Ascending aorta (tissue), 2 donors: ENCODE measurements at regions of chr2 and their contacts with region 1.

Region 1: GRCh38 chr2:237691908-237692600 is 64.7 kb downstream of the LRRFIP1 start:
- DNase-seq: peak in 1 of 2 donors; percentile 96
- H3K4me3 ChIP-seq: peak overlapping the region; percentile 78 to 86
- H3K27ac ChIP-seq: peak overlapping the region; percentile 97 to 99
- H3K4me1 ChIP-seq: peaks cover 34 to 62% of the 10 kb centered on the region in 2 donors
- H3K27me3 ChIP-seq: no peaks in the 10 kb centered on the region
- CTCF ChIP-seq: peak in 1 of 3 experiments; percentile 12

Region 2: DNA sequence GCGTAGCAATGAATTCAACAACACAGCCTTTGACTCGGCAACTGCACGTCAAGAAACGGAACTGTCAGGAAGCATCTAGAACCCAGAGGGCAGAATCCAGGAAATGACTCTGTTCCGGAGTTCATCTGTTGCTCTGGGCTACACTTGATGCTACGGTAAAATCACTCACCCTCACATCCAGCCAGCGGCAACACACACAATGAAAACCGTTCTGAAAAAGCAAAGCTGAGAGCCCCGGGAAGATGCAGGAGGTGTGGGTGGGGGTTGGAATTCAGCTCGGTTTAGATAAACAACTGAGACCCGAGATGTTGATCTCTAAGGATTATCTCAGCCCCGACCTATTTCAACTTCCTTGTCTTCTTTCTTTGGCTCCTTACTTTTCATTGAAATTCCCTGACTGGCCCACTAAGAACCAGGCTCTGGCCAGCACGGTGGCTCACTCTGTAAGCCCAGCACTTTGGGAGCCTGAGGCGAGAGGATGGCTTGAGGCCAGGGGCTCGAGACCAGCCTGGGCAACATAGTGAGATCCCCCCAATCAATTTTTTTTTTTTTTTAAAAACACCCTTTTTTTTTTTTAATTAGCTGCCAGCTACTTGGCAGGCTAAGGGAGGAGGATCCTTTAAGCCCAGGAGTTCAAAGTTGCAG is 88.2 kb before region 1 on chr2:
- intact Hi-C with region 1: loop called (anchors 5 kb)
- DNase-seq: peak in 1 of 2 donors; percentile 86
- H3K4me3 ChIP-seq: peak overlapping the region in 1 of 2 donors; percentile 21
- H3K27ac ChIP-seq: peak overlapping the region; percentile 75 to 90
- H3K4me1 ChIP-seq: peaks cover 17 to 31% of the 10 kb centered on the region in 2 donors
- H3K27me3 ChIP-seq: no peaks in the 10 kb centered on the region
- CTCF ChIP-seq: no peak

Region 3: DNA sequence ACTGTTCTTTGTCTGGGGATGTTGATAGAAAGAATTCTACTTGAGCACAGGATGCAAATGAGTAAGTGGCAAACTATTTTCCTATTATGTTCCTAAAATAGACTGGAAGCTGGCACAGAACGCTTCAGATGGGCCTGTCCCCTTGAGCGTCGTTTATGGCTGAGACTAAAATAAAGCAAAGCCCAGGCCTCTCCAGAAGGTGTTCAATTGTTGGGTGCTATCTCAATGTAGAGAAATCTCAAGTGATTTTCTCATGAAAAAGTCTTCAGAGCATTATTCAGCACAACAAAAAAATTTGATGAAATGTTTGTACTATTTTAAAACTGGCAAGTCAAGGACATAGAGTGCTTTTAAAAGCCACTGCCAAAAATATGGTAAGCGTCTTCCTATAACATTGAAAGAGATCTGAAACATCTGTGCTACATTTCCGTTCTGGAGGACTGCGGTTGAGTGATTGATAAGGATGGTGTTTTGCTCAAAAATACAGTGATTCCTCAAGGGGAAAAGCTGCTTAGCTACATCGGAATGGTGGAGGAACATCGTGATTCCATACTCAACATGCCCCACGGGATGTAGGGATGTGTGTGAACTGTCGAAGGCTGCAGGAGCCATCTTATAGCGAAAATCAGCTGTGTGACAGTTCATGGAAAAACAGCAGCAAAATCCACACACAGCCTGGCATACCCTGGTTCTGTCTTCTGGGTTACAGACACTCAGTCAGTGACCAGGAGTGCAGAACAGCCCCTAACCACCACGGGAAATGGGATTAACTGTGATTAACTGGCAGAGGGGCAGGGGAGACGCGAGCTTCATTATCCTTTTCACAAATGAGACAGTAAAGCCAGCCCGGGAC is 75.1 kb before region 1 on chr2:
- intact Hi-C with region 1: loop called (anchors 2 kb)
- DNase-seq: no peak
- H3K4me3 ChIP-seq: no peak overlapping the region
- H3K27ac ChIP-seq: peak overlapping the region; percentile 89 to 93
- H3K4me1 ChIP-seq: peaks cover 13 to 51% of the 10 kb centered on the region in 2 donors
- H3K27me3 ChIP-seq: no peaks in the 10 kb centered on the region
- CTCF ChIP-seq: no peak

Region 4: GRCh38 chr2:237674731-237675276 is 17.2 kb before region 1 on chr2:
- intact Hi-C with region 1: loop called (anchors 2 kb)
- DNase-seq: peak; percentile 83 to 95
- H3K4me3 ChIP-seq: peak overlapping the region; percentile 32 to 57
- H3K27ac ChIP-seq: peak overlapping the region; percentile 83 to 86
- H3K4me1 ChIP-seq: peaks cover 14 to 59% of the 10 kb centered on the region in 2 donors
- H3K27me3 ChIP-seq: no peaks in the 10 kb centered on the region
- CTCF ChIP-seq: peak in 1 of 3 experiments; percentile 26

Region 5: GRCh38 chr2:237714690-237715458 is 22.8 kb after region 1 on chr2:
- intact Hi-C with region 1: loop called (anchors 2 kb)
- DNase-seq: no peak
- H3K4me3 ChIP-seq: peak overlapping the region in 1 of 2 donors; percentile 52
- H3K27ac ChIP-seq: peak overlapping the region; percentile 54 to 72
- H3K4me1 ChIP-seq: peaks cover 8 to 29% of the 10 kb centered on the region in 2 donors
- H3K27me3 ChIP-seq: no peaks in the 10 kb centered on the region
- CTCF ChIP-seq: no peak

Region 6: GRCh38 chr2:237744613-237745249 is 52.7 kb after region 1 on chr2:
- intact Hi-C with region 1: loop called (anchors 2 kb)
- DNase-seq: peak in 1 of 2 donors; percentile 89
- H3K4me3 ChIP-seq: peak overlapping the region in 1 of 2 donors; percentile 13
- H3K27ac ChIP-seq: peak overlapping the region; percentile 42 to 87
- H3K4me1 ChIP-seq: peaks cover 15 to 41% of the 10 kb centered on the region in 2 donors
- H3K27me3 ChIP-seq: no peaks in the 10 kb centered on the region
- CTCF ChIP-seq: peak; percentile 90 to 97 (median 95)

Region 7: GRCh38 chr2:237886685-237887481 is 194.8 kb after region 1 on chr2:
- intact Hi-C with region 1: loop called (anchors 10 kb)
- DNase-seq: peak in 1 of 2 donors; percentile 94
- H3K4me3 ChIP-seq: no peak overlapping the region
- H3K27ac ChIP-seq: peak overlapping the region; percentile 96 to 99
- H3K4me1 ChIP-seq: peaks cover 11 to 49% of the 10 kb centered on the region in 2 donors
- H3K27me3 ChIP-seq: no peaks in the 10 kb centered on the region
- CTCF ChIP-seq: no peak